ENCODE measurements at regions of chr5 and their contacts with region 1.

Region 1: DNA sequence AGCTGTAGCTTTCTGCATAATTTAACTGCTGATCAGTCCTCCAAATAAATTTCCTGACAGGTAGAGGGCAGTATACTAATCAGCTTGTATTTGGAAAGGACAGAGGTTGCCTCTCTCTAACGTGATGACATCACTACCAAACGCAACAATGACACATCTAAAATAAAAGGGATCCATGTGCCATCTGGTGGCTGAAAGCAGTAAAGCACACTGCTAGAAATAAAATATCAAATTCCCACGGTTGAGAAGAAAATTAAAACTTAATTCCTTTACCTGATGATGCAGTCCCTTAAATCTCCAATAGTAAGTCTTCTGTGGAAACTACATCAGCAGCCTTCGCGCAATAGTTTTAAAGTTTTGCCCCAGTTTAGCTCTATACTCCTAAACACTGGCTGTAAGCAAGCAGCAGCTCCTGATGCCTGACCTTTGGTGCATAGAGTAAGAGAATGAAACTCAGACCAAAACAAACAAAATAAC is 54.5 kb downstream of the DIAPH1 start:
- DNase-seq: peak; percentile 88
- H3K4me3 ChIP-seq: no peak overlapping the region
- CTCF ChIP-seq: peak; percentile 56

Region 2: DNA sequence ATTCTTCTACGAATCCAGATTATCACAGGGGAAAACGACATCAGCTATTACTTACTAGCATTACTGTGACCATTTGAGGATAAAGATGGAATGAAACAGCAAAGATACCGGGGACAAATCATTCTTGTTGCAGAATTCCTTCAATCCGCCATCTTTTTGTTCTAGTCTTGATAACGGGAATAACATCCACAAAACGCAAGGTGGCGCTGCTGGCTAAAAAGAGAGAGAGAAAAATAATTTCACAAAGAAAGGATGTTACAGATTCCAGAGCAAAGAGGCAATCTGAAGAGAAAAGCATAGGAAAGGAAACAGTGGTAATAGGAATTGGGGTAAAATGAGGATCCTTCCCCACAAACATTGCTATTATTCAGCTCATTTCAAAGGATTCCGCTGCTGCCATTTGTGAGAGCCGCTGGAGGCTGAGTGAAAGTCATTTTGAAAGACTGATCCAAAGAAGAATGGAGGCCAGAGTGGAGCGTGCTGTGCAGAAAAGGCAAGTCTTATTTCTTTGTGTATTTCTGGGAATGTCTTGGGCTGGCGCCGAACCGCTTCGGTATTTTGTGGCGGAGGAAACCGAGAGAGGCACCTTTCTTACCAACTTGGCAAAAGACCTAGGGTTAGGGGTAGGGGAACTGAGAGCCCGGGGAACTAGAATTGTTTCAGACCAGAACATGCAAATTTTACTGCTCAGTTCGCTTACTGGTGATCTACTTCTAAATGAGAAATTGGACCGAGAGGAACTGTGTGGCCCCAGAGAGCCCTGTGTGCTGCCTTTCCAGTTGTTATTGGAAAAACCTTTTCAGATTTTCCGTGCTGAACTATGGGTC is 391.7 kb before region 1 on chr5 and contains the start of gene PCDHB7:
- CTCF ChIA-PET with region 1: interaction called, 11 read pairs
- POLR2A ChIA-PET with region 1: no interaction called
- DNase-seq: no peak
- H3K4me3 ChIP-seq: peak within 1 kb of the TSS; percentile 13; the same call in 1 of the 2 replicates
- CTCF ChIP-seq: peak; percentile 20

Region 3: DNA sequence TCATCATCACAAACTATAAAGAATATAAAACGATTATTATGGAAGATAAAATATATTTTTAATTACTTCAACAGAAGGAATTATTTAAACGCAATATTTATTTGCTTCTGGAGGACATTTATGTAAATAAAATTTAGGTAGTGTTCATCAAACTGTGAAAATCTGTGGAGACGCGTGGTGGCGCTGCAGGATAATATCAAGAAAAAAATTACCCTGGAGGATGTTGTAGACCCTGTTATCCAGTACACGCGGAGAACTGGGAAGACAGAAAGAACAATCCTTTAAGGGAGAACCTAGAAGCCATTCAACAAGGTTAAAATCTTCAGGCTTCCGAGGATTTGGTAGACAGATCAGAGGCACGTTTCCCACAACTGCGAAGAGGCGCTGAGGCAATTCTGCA is 355.8 kb before region 1 on chr5 and contains the start of gene PCDHB12:
- CTCF ChIA-PET with region 1: interaction called, 26 read pairs
- POLR2A ChIA-PET with region 1: no interaction called
- DNase-seq: no peak
- H3K4me3 ChIP-seq: no peak within 1 kb of the TSS; the same call in 1 of the 2 replicates
- CTCF ChIP-seq: no peak

Region 4: GRCh38 chr5:141326088-141326854 is 238.0 kb before region 1 on chr5:
- CTCF ChIA-PET with region 1: interaction called, 209 read pairs
- POLR2A ChIA-PET with region 1: no interaction called
- DNase-seq: no peak
- H3K4me3 ChIP-seq: peak overlapping the region; percentile 64
- CTCF ChIP-seq: peak; percentile 70

Region 5: DNA sequence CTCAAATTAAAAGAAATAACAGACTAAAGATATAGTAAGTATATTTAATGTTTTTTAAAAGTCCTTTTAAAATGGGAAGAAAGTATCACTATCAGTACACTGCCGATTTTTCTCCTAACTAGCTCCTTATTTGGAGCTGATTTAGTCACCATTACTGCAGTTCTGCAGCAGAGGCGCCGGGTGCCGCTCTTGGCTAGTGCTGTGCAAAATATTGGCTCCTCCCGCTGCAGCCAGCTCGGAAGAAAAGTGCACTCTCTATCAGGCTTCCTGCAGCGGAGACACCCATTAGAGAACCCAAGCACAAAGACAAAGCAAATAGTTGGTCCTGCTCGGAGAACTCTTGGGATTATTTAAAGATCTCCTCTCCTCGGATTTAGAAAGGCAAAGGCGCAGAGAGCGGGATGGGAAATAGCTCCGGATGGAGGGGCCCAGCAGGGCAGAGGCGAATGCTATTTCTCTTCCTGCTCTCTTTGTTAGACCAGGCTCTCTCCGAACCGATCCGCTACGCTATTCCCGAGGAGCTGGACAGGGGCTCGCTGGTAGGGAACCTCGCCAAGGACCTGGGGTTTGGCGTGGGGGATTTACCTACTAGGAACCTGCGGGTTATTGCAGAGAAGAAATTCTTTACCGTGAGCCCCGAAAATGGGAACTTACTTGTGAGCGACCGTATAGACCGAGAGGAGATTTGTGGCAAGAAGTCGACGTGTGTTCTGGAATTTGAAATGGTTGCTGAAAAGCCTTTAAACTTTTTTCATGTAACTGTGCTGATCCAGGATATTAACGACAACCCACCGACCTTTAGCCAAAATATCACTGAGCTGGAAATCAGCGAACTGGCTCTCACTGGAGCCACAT is 194.0 kb before region 1 on chr5 and contains the start of gene PCDHGB3:
- CTCF ChIA-PET with region 1: interaction called, 99 read pairs
- POLR2A ChIA-PET with region 1: interaction called, 9 read pairs
- DNase-seq: no peak
- H3K4me3 ChIP-seq: peak within 1 kb of the TSS; percentile 45
- CTCF ChIP-seq: peak; percentile 40

Region 6: GRCh38 chr5:141420855-141421496 is 143.3 kb before region 1 on chr5 and contains the start of gene PCDHGA11:
- CTCF ChIA-PET with region 1: interaction called, 303 read pairs
- POLR2A ChIA-PET with region 1: interaction called, 4 read pairs
- DNase-seq: no peak
- H3K4me3 ChIP-seq: peak within 1 kb of the TSS; percentile 57
- CTCF ChIP-seq: peak; percentile 41

Region 7: GRCh38 chr5:141590127-141590526 is 25.9 kb after region 1 on chr5:
- CTCF ChIA-PET with region 1: interaction called, 46 read pairs
- POLR2A ChIA-PET with region 1: no interaction called
- DNase-seq: no peak
- H3K4me3 ChIP-seq: no peak overlapping the region
- CTCF ChIP-seq: no peak

Region 8: DNA sequence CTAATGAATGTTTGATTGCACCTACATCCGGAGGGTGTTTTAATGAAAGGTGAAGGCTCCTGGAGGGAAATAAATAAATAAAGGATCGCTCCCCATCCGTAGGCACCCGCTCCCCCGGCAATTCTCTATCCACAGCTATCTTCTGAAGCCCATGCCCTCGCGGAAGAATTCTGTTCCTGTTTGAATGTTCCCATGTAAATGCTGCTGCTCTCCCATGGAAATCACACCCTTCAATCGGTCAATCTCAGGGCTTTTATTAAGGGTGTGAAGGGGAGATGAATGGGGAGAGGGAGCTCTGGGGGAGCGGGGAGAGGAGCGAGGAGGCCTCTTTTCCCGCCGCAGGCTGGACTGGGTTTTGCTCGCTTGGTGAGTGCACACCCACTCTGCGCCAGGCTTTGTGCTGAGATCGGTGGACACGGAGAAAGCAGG is 138.9 kb after region 1 on chr5:
- CTCF ChIA-PET with region 1: no interaction called
- POLR2A ChIA-PET with region 1: no interaction called
- DNase-seq: no peak
- H3K4me3 ChIP-seq: peak overlapping the region; percentile 54; the same call in 1 of the 2 replicates
- CTCF ChIP-seq: no peak

Measured in AG04449 (cell line).